ENCODE measurements at regions of chr16 and their contacts with region 1.

Region 1: GRCh38 chr16:85615852-85616606 is 2.9 kb downstream of the GSE1 start:
- H3K4me3 ChIP-seq: no peak overlapping the region; the same call in 1 of the 2 replicates
- H3K27ac ChIP-seq: peak overlapping the region; percentile 99
- H3K4me1 ChIP-seq: peaks cover 6% of the 10 kb centered on the region; the same call in 1 of the 2 replicates
- CTCF ChIP-seq: peak; percentile 91

Region 2: DNA sequence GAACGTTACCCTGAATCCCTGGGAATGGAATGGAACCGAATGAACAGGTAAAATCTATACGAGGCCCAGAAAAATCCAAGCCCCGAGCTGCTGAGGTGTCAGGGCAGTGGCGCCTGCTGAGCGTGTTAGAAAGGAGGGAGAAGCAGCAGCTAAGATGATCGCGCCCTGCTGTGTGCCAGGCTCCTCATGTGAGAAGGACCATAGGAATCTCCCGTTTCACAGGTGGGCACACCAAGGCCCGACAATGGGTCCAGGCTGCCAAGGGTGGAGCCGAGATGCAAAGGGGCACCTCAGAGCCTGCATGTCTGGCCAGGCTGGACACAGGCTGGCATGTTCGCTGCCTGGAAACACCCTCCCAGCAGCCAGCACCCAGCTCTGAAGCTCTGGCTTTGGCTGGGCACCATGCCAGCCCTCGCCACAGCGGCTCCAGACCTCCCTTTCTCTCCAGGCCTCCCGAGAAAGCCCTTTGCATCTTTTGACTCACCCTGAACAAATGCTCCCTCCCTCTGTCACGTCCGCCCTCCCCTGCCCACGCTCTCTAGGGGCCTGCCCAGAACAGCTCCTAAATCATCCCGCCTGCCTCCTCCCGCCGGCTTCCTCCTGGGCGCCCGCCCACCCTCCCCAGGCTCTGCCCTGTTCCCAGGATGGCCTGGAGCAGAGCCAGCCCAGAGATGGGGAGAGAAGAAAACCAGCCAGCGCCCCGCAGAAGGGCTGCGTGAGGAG is 220.7 kb before region 1 on chr16:
- CTCF ChIA-PET with region 1: interaction called, 12 read pairs
- POLR2A ChIA-PET with region 1: interaction called, 5 read pairs
- H3K4me3 ChIP-seq: no peak overlapping the region
- H3K27ac ChIP-seq: no peak overlapping the region
- H3K4me1 ChIP-seq: peaks cover 16% of the 10 kb centered on the region
- CTCF ChIP-seq: no peak

Region 3: GRCh38 chr16:85554112-85554813 is 61.8 kb before region 1 on chr16:
- CTCF ChIA-PET with region 1: interaction called, 16 read pairs
- POLR2A ChIA-PET with region 1: interaction called, 37 read pairs
- H3K4me3 ChIP-seq: peak overlapping the region; percentile 69
- H3K27ac ChIP-seq: peak overlapping the region; percentile 91
- H3K4me1 ChIP-seq: peaks cover 5% of the 10 kb centered on the region
- CTCF ChIP-seq: no peak

Region 4: DNA sequence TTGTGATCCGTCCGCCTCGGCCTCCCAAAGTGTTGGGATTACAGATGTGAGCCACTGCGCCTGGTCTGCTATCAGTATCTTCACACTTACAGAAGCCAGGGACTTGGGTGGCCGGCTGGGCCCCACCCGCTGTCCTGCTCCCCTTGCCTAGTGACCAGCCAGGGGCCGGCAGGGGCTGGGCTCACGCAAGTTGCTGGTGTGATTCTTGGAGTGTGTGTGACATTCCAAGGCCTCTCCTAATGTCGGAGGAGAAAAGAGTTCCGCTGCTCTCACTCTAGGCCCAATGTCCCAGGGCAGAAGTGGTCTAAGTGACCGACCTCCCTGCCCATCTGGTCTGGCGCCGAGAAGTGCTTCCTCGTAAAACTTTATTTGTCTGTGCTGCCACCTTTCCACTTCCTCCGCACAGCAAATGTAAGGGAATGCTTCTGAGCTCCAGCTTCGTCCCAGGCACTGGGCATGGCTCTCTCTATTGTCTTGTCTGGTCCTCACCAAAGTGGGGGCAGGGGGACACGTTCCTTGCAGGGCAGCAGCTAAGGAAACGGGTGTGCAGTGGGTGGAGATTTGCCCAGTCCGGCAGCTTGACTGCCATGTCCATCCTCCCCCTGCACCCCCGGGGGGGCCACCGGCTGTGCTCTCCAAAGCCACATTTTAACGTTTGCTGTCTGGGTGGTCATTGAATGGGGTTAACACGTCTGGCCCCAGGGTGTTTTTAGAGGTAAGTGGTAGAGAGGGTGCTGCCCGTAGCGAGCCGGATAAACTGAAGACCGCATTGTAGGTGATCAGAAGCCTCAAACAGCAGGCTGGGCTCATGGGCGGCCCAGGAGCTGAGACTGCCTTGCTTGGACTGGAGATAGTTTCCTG is 10.7 kb before region 1 on chr16:
- CTCF ChIA-PET with region 1: interaction called, 12 read pairs
- POLR2A ChIA-PET with region 1: no interaction called
- H3K4me3 ChIP-seq: no peak overlapping the region
- H3K27ac ChIP-seq: no peak overlapping the region
- H3K4me1 ChIP-seq: peaks cover 2% of the 10 kb centered on the region; the same call in 1 of the 2 replicates
- CTCF ChIP-seq: no peak

Region 5: DNA sequence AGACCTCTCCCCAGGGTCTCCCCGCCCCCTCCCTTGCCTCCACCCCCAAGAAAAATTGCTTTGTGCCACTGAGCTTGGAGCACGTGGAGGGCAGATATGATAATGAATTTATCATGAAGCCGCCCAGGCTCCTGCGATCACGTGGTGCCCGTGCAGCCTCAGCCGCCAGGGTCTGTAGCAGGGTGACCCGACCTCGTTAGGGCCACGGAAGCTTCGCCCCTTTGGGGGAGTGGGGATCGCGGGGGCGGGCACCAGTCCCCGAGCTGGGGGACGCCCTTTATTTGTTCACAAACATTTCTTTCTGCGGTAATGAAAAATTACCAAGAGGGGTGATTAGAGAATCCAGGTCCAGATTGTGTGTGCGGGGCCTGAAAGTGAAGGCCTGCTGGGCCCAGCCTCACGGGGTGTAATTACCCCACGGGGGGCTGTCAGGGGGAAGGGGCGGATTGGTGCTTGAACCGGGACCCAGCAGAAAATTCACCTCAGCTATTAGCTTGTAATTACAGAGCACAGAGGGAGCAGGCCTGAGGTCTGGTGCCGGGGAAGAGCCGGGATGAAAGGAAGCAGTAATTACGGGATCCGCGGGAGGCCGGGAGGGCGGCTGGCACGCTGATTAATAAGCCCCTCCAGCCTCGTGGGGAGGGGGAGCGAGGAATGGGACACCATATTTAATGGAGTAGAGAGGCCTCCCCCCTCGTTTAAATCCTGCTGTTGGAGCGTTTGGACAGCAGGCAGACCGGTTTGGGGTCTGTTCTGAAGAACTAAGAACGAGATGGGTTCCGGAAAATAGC is 10.4 kb after region 1 on chr16:
- CTCF ChIA-PET with region 1: interaction called, 29 read pairs
- POLR2A ChIA-PET with region 1: interaction called, 4 read pairs
- H3K4me3 ChIP-seq: no peak overlapping the region
- H3K27ac ChIP-seq: peak overlapping the region; percentile 20; the same call in 1 of the 2 replicates
- H3K4me1 ChIP-seq: peaks cover 11% of the 10 kb centered on the region
- CTCF ChIP-seq: no peak

Region 6: DNA sequence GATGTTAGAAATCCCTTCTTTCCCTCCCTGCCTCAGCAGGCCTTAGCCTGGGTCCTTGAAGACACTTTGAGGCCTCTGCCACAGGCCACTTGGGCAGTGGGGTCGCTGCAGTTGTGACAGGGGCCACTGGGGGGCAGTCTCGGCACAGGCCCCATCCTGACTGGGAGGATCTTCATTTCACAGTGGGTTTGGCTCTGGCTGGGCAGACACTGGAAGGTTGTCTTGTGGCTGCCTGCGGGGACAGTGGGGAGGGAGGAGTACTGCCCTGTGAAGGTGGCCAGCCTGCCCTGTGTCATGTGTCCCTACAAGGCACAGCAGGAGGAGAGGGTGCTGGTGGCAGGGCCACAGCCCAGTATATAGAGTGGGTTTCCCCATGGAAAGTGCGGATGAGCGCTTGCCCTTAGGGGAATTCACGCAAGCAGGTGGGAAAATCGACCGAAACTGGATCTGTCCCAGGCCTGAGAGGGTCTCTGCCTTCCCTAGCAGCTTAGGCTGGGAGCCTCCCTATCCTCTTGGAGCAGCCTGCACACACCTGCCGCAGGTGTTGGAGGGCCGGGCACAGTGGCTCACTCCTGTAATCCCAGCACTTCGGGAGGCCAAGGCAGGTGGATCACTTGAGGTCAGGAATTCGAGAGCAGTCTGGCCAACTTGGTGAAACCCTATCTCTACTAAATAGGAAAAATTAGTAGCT is 43.9 kb after region 1 on chr16:
- CTCF ChIA-PET with region 1: interaction called, 13 read pairs
- POLR2A ChIA-PET with region 1: interaction called, 3 read pairs
- H3K4me3 ChIP-seq: no peak overlapping the region
- H3K27ac ChIP-seq: no peak overlapping the region
- H3K4me1 ChIP-seq: no peaks in the 10 kb centered on the region
- CTCF ChIP-seq: peak; percentile 86

Region 7: GRCh38 chr16:85759631-85760419 is 143.8 kb after region 1 on chr16:
- CTCF ChIA-PET with region 1: no interaction called
- POLR2A ChIA-PET with region 1: no interaction called
- H3K4me3 ChIP-seq: no peak overlapping the region
- H3K27ac ChIP-seq: no peak overlapping the region
- H3K4me1 ChIP-seq: no peaks in the 10 kb centered on the region
- CTCF ChIP-seq: peak; percentile 67

Measured in HEK293 (cell line).